Spleen (tissue), 13 donors: ENCODE measurements at regions of chr15 and their contacts with region 1.

Region 1: DNA sequence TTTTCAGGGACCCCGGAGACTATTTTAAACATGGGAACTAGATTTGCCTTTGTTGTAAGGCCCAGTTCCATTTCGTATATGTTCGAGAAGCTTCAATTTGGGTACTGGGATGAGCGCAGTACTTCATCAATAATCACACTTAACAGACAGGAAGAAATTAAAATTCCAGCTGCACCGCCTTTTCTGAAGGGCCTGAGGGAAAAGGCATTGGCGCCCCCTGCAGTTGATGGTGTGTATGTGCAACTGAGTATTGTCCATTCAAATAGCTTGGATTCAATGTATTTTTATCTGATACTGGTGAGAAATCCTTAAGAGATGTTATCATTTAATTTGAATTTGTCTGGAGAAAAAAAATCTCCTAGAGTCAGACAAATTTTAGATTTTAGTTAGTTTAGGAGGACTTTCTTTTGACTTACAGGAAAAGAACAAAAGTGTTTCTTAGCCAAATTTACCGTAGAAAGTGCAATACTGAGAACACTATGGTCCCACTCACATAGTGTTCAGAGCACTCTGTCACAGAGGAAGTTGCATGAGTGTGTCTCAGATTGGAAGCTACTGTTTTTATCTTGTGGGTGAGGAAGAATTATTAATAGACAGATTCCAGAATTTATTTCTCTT is 5.4 kb upstream of the ALDH1A2 start:
- DNase-seq: peak; percentile 74
- H3K4me3 ChIP-seq: no peak overlapping the region
- H3K27ac ChIP-seq: no peak overlapping the region
- H3K4me1 ChIP-seq: peaks cover 0 to 15% (median 8%) of the 10 kb centered on the region in 6 donors
- H3K27me3 ChIP-seq: peaks cover 0 to 52% (median 10%) of the 10 kb centered on the region in 7 donors
- CTCF ChIP-seq: peak in 10 of 11 experiments; percentile 33 to 86 (median 76)
- POLR2A ChIP-seq: no peak

Region 2: DNA sequence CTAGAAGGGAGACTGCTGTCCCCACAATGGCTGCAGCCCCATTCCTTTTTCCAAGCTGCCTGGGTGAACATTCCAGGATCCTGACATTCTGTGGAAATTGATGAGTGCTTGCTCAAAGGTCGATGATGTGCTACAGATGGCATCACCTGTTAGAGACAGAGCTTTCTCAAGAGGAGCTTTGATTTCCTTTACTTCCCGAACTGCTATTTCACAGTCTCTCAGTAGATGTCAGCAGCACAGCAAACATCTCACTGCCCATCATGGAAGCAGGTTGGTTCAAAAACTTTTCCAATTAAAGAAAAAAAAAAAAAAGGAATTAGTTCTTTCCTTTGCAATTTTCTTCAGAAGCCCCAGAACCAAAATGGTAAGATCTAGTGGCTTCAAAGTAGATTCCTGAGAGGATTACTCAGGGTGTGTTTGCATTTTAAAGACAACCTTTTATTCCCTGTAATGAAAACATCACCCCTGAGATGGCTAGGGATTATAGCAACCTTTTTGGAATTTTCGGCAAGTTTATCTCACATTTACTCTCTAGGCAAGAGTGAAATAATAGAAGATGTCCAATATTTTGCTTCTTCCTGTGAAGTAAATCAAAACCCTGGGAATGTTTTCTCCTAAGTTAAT is 319.6 kb before region 1 on chr15:
- intact Hi-C with region 1: loop called (anchors 10 kb)
- DNase-seq: no peak
- H3K4me3 ChIP-seq: no peak overlapping the region
- H3K27ac ChIP-seq: no peak overlapping the region
- H3K4me1 ChIP-seq: peaks cover 0 to 9% (median 0%) of the 10 kb centered on the region in 6 donors
- H3K27me3 ChIP-seq: no peaks in the 10 kb centered on the region
- CTCF ChIP-seq: peak in 9 of 11 experiments; percentile 17 to 51 (median 34)
- POLR2A ChIP-seq: no peak

Region 3: GRCh38 chr15:57873564-57874209 is 197.2 kb before region 1 on chr15:
- intact Hi-C with region 1: loop called (anchors 5 kb)
- DNase-seq: no peak
- H3K4me3 ChIP-seq: no peak overlapping the region
- H3K27ac ChIP-seq: no peak overlapping the region
- H3K4me1 ChIP-seq: no peaks in the 10 kb centered on the region
- H3K27me3 ChIP-seq: peaks cover 0 to 27% (median 4%) of the 10 kb centered on the region in 7 donors
- CTCF ChIP-seq: no peak
- POLR2A ChIP-seq: no peak

Region 4: GRCh38 chr15:58124585-58124984 is 53.7 kb after region 1 on chr15:
- intact Hi-C with region 1: no loop called
- DNase-seq: no peak
- H3K4me3 ChIP-seq: no peak overlapping the region
- H3K27ac ChIP-seq: no peak overlapping the region
- H3K4me1 ChIP-seq: no peaks in the 10 kb centered on the region
- H3K27me3 ChIP-seq: no peaks in the 10 kb centered on the region
- CTCF ChIP-seq: no peak
- POLR2A ChIP-seq: no peak